ENCODE measurements at regions of chr6 and their contacts with region 1.

Region 1: DNA sequence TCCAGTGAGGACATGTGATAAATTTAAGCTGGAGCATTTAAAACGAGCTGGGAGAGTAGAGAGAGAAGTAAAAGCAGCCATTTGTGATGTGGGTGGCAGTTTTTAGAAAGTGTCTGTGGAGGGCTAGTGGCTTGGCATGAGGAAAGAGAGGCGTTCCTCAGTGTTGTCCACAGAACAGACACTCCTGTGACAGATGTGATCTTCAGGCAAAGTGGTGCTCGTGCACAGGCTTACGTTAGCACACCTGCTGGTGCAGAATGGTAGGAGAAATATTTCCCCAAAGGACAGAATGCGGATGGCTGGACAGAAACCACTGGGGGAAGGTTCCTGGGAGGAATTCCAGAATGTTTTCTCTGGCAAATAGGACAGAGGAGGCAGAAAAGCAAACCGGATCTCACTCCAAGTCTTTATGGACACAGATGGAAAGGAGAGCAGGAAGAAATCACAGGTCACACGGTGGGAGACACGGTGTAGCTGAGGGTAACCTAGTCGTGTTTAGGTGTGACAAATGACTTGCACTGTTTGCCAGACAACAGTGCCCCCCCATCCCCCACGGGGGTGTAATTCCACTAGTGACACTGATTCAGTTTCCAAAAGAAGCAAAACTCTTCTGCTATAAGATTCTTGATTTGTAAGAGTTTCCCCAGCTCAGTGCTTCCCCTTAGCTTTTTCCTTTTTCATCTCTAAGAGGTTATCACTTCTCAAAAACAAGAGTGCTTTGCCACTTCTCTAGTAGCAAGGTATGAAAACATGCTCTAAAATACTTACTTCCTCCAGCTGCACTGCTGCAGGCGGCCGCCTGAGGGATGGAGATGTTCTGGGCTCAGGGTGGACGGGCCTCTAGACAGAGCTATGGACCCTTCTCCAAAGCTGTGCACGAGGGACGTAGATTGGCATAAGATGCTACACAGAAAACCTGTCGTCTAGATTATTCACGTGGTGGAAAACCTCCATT is 293.2 kb downstream of the QKI start:
- DNase-seq: no peak
- H3K4me3 ChIP-seq: no peak overlapping the region
- CTCF ChIP-seq: no peak

Region 2: GRCh38 chr6:163608204-163608644 is 99.5 kb before region 1 on chr6:
- in situ Hi-C with region 1: loop called (anchors 5 kb)
- DNase-seq: no peak
- H3K4me3 ChIP-seq: no peak overlapping the region
- CTCF ChIP-seq: no peak

Region 3: DNA sequence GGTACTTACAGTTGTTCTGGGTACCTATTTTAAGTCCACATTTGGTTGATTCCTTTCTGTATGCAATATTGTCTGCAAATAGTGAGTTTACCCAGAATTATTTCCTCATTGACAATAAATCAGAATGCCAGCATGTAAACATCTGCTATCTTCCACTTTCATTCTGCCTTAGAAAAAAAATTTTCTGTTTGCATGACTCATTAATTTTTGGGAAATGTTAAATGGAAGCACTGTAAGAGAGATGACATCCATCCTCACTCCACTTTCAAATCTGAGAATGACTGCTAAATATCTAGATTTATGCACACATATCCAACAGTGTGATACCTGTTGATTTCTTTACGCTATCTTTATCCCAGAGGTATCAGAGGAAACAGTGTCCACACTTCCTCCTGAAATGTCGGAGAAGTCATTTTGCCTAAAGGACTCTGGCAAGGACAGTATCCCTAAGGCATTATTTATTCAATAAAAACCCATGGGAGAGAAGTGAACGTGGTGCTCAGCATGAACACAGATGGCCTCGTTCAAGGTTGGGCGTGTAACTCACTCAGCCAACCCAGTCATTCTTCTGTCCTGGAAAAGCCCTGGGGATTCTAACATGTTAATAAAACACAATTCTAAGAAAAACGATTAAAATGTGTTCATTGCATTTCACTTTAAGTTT is 487.7 kb after region 1 on chr6:
- in situ Hi-C with region 1: no loop called
- DNase-seq: no peak
- H3K4me3 ChIP-seq: no peak overlapping the region
- CTCF ChIP-seq: no peak